Dorsolateral prefrontal cortex (tissue), 120 donors: ENCODE measurements at regions of chr15 and their contacts with region 1.

Region 1: GRCh38 chr15:51299187-51300066 is 39.0 kb downstream of the CYP19A1 start:
- DNase-seq: peak in 2 of 10 donors; percentile 25 to 50
- H3K4me3 ChIP-seq: no peak overlapping the region
- H3K27ac ChIP-seq: peak overlapping the region in 55 of 59 donors; percentile 0 to 88 (median 69)
- H3K27me3 ChIP-seq: no peaks in the 10 kb centered on the region
- CTCF ChIP-seq: peak in 10 of 56 donors; percentile 12 to 46 (median 22)

Region 2: GRCh38 chr15:51335538-51336321 is 36.3 kb after region 1 on chr15:
- intact Hi-C with region 1: loop called in 1 of 2 experiments (anchors 5 kb)
- DNase-seq: peak in 1 of 10 donors; percentile 48
- H3K4me3 ChIP-seq: no peak overlapping the region
- H3K27ac ChIP-seq: peak overlapping the region in 30 of 59 donors; percentile 2 to 71 (median 40)
- H3K27me3 ChIP-seq: no peaks in the 10 kb centered on the region
- CTCF ChIP-seq: no peak

Region 3: GRCh38 chr15:51484781-51485180 is 185.4 kb after region 1 on chr15:
- intact Hi-C with region 1: no loop called
- DNase-seq: no peak
- H3K4me3 ChIP-seq: no peak overlapping the region
- H3K27ac ChIP-seq: no peak overlapping the region
- H3K27me3 ChIP-seq: no peaks in the 10 kb centered on the region
- CTCF ChIP-seq: no peak